H1 (cell line): ENCODE measurements at regions of chr12 and their contacts with region 1.

Region 1: DNA sequence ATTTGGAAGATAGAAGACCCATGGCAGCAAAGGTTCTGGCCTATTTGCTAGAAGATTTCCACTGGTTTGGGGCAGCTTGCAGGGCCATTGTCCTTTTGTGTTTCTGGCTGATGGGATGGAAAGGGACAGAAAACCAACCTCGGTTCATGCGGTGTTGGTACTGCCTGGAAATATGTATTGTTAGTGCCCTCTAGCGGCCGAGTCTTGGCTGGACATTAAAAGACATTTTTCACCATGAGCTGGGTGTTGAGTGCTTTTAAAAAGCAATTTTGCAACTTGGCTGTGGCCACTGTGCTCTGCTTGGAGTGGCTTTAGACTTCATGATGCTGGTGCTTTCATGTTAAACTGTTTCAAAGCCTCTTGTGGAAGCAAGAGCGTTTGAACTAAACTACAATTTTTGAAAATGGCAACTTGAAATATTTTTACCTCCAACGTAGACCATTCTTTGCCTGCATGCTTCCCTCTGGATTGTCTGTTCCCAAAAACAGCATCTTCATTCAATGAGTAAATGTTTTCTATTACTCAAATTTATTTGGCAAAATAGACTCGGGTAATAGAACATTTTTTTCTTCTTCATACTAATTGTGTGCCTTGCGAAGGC is 102.7 kb upstream of the TBX5 start:
- DNase-seq: peak; percentile 56 to 82
- H3K4me3 ChIP-seq: no peak overlapping the region
- H3K27ac ChIP-seq: no peak overlapping the region
- H3K4me1 ChIP-seq: no peaks in the 10 kb centered on the region
- H3K27me3 ChIP-seq: peaks cover 0 to 6% (median 0%) of the 10 kb centered on the region in 4 experiments; a peak in 2 of 7 replicates
- CTCF ChIP-seq: peak; percentile 40 to 86 (median 78)
- EP300 ChIP-seq: peak in 1 of 2 experiments; percentile 8; a peak in 1 of 3 replicates
- POLR2A ChIP-seq: no peak
- RAD21 ChIP-seq: peak; percentile 94 to 95

Region 2: DNA sequence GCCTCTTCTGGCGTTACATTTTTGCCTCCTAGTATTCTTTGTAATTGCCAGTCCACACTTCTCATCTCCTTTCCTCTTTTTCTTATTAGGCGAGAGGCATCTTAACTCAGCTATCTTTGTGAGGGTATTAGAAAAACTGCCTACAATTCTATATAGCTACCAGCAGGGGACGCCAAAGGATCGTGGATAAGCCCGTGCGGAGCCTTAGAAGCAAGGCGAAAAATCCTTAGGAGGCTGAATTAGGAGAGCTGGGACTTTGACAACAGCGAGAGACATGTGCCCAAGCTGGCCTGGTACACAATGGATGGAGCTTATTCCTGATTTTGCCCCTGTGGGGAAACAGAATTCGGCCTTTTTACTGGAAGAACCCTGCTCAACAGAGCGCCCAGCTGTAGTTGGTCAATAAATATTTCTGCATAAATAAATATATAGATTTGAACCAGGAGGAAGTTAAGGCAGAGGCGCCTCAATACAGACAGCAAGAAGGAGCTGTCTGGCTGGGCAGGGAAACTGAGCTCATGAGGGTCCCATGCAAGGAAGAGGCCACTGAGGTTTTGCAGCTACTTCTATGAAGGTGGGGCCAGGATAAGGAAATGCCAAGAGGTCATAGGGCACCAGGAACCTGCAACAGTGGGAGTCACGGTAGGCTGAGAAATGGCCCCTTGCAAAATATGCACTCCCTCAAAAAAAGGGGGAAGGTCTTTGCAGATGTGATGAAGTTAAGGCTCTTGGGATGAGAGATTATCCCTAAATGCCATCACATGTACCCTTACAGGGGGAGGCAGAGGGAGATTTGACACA is 527.9 kb before region 1 on chr12:
- CTCF ChIA-PET with region 1: interaction called, 30 read pairs
- POLR2A ChIA-PET with region 1: no interaction called
- DNase-seq: peak; percentile 36 to 66
- H3K4me3 ChIP-seq: no peak overlapping the region
- H3K27ac ChIP-seq: no peak overlapping the region
- H3K4me1 ChIP-seq: no peaks in the 10 kb centered on the region
- H3K27me3 ChIP-seq: peaks cover 0 to 5% (median under 1%) of the 10 kb centered on the region in 4 experiments; a peak in 1 of 7 replicates
- CTCF ChIP-seq: peak; percentile 48 to 90 (median 88)
- EP300 ChIP-seq: no peak
- POLR2A ChIP-seq: no peak
- RAD21 ChIP-seq: peak; percentile 99

Region 3: DNA sequence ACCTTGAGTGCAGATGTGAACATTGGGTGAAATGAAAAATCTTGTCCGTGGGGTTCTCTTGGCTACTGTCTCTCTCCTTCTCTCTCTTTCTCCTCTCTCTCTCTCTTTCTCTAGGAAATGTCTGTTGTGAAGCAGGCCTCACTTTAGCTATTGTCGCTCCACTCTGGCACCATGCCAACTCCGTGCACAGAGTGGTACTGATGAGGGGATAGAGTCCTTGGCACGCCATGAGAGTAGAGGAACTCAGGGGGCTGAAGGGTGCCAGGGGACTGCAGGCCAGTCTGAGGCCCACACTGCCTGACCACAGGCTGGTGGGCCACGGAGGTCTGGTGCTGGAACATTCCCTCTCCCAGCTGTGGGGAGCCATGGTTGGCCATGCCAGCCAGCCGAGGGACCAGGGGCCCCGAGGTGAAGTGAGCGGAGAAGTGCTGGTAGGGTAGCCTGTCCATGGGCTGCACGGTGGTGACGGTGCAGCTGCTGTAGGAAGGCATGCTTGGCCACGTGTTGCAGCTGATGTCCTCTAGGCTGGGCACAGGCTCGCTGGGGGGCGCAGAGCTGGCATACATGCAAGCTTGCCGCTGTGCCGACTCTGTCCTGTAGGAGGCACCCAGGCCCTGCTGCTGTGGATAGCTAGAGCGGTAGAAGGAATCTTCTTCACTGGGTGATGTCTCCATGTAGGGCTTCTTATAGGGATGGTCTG is 153.1 kb before region 1 on chr12:
- CTCF ChIA-PET with region 1: interaction called, 11 read pairs
- POLR2A ChIA-PET with region 1: no interaction called
- DNase-seq: peak in 1 of 2 experiments; percentile 87
- H3K4me3 ChIP-seq: no peak overlapping the region
- H3K27ac ChIP-seq: no peak overlapping the region
- H3K4me1 ChIP-seq: peaks cover 0 to 2% (median 0%) of the 10 kb centered on the region in 4 experiments; a peak in 2 of 7 replicates
- H3K27me3 ChIP-seq: no peaks in the 10 kb centered on the region; a peak in 1 of 7 replicates
- CTCF ChIP-seq: peak; percentile 82 to 97 (median 94)
- EP300 ChIP-seq: no peak
- POLR2A ChIP-seq: no peak
- RAD21 ChIP-seq: peak; percentile 82 to 87

Region 4: DNA sequence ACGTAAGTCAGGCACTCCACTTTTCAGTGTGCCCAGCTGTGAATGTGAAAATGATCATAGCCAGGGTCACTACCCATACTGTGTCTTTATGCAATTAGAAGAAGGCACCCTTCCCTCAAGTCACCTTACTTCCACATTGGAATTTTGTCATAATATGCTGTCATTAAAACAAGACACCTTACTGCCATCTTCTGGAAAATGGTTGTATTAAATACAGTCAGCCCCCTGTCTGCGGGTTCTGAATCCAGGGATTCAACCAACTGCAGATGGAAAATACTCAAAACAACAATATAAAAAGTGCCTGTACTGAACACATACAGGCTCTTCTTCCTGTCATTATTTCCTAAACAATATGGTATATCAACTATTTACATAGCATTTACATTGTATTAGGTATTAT is 32.5 kb before region 1 on chr12:
- CTCF ChIA-PET with region 1: interaction called, 21 read pairs
- POLR2A ChIA-PET with region 1: no interaction called
- DNase-seq: no peak
- H3K4me3 ChIP-seq: no peak overlapping the region
- H3K27ac ChIP-seq: no peak overlapping the region
- H3K4me1 ChIP-seq: peaks cover 0 to 9% (median 0%) of the 10 kb centered on the region in 4 experiments; a peak in 2 of 7 replicates
- H3K27me3 ChIP-seq: peaks cover 21 to 45% (median 40%) of the 10 kb centered on the region in 4 experiments
- CTCF ChIP-seq: peak in 2 of 3 experiments; percentile 50 to 79; a peak in 3 of 4 replicates
- EP300 ChIP-seq: no peak
- POLR2A ChIP-seq: no peak
- RAD21 ChIP-seq: peak; percentile 68 to 73

Region 5: GRCh38 chr12:114491916-114492315 is 16.7 kb before region 1 on chr12:
- CTCF ChIA-PET with region 1: interaction called, 10 read pairs
- POLR2A ChIA-PET with region 1: no interaction called
- DNase-seq: no peak
- H3K4me3 ChIP-seq: no peak overlapping the region
- H3K27ac ChIP-seq: no peak overlapping the region
- H3K4me1 ChIP-seq: no peaks in the 10 kb centered on the region
- H3K27me3 ChIP-seq: peaks cover 0 to 3% (median 1%) of the 10 kb centered on the region in 4 experiments; a peak in 2 of 7 replicates
- CTCF ChIP-seq: no peak
- EP300 ChIP-seq: no peak
- POLR2A ChIP-seq: no peak
- RAD21 ChIP-seq: no peak

Region 6: GRCh38 chr12:114625294-114625851 is 116.7 kb after region 1 on chr12:
- CTCF ChIA-PET with region 1: interaction called, 11 read pairs
- POLR2A ChIA-PET with region 1: no interaction called
- DNase-seq: peak; percentile 43 to 88
- H3K4me3 ChIP-seq: no peak overlapping the region
- H3K27ac ChIP-seq: no peak overlapping the region
- H3K4me1 ChIP-seq: no peaks in the 10 kb centered on the region
- H3K27me3 ChIP-seq: no peaks in the 10 kb centered on the region
- CTCF ChIP-seq: peak; percentile 84 to 92 (median 86)
- EP300 ChIP-seq: no peak
- POLR2A ChIP-seq: no peak
- RAD21 ChIP-seq: peak; percentile 95 to 99